Colonic mucosa (tissue), 4 donors: ENCODE measurements at regions of chr16 and their contacts with region 1.

Region 1: GRCh38 chr16:2023098-2023925 is 3.4 kb upstream of the NHERF2 start:
- DNase-seq: peak; percentile 98
- H3K4me3 ChIP-seq: peak overlapping the region; percentile 27
- H3K27ac ChIP-seq: peak overlapping the region; percentile 57
- H3K4me1 ChIP-seq: peaks cover 12% of the 10 kb centered on the region
- H3K27me3 ChIP-seq: peaks cover 24% of the 10 kb centered on the region
- CTCF ChIP-seq: peak; percentile 80

Region 2: GRCh38 chr16:2142942-2143877 is 119.9 kb after region 1 on chr16:
- intact Hi-C with region 1: loop called (anchors 5 kb)
- DNase-seq: no peak
- H3K4me3 ChIP-seq: no peak overlapping the region
- H3K27ac ChIP-seq: no peak overlapping the region
- H3K4me1 ChIP-seq: peaks cover 10% of the 10 kb centered on the region
- H3K27me3 ChIP-seq: no peaks in the 10 kb centered on the region
- CTCF ChIP-seq: no peak